AG04450 (cell line): ENCODE measurements at regions of chr2 and their contacts with region 1.

Region 1: DNA sequence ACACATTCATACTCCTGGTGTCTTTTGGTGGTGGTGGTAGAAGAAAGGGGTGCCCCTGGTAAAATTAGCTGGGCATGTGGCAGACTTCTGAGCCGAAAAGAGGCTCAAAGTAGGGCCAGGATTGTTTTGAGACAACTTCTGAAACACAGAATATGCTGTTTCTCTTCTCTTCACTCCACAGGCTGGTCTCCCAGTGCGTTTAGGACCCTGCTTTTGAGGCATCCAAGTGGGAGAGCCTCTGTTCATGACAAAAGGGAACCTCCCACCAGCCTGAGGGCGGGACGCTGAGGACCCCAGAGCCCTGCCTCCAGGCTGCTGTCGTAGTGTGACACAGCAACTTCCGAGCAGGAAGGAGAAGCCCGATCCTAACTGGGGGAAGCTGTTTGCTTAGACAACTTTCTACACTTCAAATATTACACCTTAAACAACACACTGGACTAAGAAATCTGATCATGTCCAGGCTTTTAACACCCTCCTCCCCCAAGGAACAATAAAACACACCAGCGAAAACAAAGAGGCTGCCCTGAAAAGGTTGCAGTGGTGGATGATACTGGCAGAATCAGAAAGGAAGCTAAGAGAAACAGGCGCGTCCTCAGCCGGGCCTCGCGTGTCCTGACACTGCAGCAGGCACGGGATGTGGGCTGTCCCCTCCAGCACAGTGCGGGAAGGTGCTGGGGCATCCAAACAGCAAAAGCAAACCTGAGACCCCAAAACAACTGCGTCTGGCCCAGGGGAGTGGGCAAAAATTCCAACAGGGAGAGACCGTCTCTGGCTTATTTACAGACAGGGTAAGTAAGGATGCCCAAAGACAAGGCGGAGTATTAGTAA is 9.3 kb downstream of the SERTAD2 start:
- DNase-seq: no peak
- H3K4me3 ChIP-seq: peak overlapping the region; percentile 62
- H3K27ac ChIP-seq: peak overlapping the region; percentile 96
- H3K27me3 ChIP-seq: no peaks in the 10 kb centered on the region
- CTCF ChIP-seq: no peak

Region 2: DNA sequence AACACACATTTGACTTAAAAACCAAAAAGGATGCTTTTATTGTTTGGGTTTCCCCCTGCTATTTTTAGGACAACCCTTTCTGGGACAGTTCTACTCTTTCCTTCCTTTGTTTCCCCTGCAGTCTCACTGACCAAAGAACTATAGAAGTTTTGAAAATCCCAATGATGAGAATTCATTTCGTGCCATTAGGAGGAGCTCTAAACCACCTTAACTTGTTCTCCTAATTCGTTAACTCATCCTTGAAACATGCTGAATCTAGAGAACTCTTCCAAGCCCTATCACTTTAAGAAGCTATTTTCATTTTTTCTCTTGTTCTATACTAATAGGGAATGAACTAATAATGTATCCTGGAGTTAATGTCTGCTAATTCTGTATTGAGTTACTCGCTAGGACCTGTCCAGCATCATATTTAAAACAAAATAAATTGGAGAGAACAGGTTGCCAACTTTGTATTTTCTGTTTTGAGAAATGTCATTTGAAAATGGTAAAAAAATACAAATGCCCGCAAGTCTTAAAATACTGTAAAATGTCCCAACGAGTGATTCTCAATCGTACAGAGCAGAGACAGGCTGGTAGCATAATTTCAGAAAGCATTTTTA is 57.4 kb before region 1 on chr2:
- CTCF ChIA-PET with region 1: interaction called, 18 read pairs
- POLR2A ChIA-PET with region 1: no interaction called
- DNase-seq: peak; percentile 11
- H3K4me3 ChIP-seq: no peak overlapping the region
- H3K27ac ChIP-seq: no peak overlapping the region
- H3K27me3 ChIP-seq: no peaks in the 10 kb centered on the region
- CTCF ChIP-seq: peak; percentile 70

Region 3: DNA sequence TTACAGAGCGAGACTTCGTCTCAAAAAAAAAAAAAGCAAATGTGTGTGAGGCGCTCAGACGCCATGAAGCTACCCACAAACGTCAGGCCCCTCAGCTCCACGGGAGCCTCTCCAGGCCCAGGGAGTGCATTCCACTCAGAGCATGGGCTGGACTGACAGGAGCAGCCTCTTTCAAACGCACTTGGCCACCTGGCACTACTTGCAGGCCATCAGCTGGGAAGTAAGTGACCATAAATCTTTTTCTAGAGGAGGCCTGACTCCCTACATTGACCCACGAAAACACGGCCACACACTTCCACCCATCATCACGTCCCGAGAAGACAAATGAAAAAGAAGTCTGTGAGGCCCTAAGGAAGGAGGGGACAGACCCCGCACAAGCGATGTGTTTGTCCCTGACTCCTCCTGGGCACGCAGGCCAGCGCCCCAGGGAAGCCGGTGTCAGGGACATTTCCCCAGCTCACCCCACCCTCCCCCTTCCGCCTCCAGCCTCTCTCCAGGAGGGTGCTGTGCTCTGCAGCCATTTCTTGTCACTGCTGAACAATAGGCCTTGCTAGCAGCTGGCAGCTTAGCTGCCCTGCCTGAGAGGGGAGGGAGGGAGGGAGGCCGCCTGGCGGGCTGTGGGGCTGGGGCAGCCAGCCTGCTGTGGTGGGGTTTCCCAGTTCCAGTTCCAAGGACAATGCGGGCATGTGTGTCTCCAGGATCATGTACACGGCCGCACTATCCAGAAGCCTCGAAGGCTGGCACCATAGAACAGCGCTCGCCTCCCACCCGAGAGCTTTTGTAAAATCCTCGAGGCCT is 17.2 kb before region 1 on chr2:
- CTCF ChIA-PET with region 1: interaction called, 35 read pairs
- POLR2A ChIA-PET with region 1: no interaction called
- DNase-seq: no peak
- H3K4me3 ChIP-seq: no peak overlapping the region
- H3K27ac ChIP-seq: no peak overlapping the region
- H3K27me3 ChIP-seq: peaks cover 8% of the 10 kb centered on the region
- CTCF ChIP-seq: no peak

Region 4: GRCh38 chr2:64704161-64704560 is 59.8 kb after region 1 on chr2:
- CTCF ChIA-PET with region 1: interaction called, 10 read pairs
- POLR2A ChIA-PET with region 1: no interaction called
- DNase-seq: no peak
- H3K4me3 ChIP-seq: no peak overlapping the region
- H3K27ac ChIP-seq: no peak overlapping the region
- H3K27me3 ChIP-seq: no peaks in the 10 kb centered on the region
- CTCF ChIP-seq: no peak

Region 5: GRCh38 chr2:64750817-64751285 is 106.5 kb after region 1 on chr2:
- CTCF ChIA-PET with region 1: interaction called, 16 read pairs
- POLR2A ChIA-PET with region 1: interaction called, 7 read pairs
- DNase-seq: peak; percentile 100
- H3K4me3 ChIP-seq: peak overlapping the region; percentile 85
- H3K27ac ChIP-seq: peak overlapping the region; percentile 60
- H3K27me3 ChIP-seq: no peaks in the 10 kb centered on the region
- CTCF ChIP-seq: no peak

Region 6: DNA sequence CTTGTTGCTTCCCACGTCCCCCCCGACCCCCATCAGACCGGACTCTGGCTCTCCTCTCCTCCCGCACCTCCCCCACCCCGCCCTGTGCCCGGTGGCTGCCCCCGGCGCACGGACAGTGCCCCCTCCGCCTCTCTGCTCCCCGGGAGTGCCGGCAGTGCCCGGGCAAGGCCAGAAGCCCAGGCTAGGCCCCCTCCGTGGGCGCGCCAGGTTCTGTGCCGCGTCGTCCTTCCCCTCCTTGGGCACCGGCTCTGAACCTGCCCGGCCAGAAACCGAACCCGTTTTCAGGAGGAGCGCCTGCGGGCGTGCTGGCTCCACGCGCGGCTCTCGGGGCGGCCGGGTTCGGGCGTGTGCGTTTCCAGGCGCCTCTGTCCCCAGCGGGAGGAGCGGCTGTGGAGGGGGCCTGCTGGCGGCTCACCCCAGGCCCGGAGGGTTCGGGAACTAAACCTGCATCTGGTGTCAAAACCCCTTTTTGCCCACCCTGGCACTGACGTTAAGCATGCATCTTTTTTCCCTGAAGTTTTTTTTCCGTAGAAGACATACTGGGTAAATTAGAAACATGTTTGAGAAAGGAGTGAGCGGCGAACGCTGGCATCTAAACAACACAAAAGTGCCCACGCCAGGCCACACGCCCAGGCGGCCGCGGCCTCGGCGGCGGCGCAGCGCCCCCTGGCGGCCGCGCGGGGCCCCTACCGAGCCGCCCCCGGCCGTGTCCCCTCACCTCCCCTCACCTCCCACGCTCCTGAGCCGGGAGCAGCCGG is 220.9 kb after region 1 on chr2:
- CTCF ChIA-PET with region 1: interaction called, 44 read pairs
- POLR2A ChIA-PET with region 1: interaction called, 14 read pairs
- DNase-seq: no peak
- H3K4me3 ChIP-seq: peak overlapping the region; percentile 57
- H3K27ac ChIP-seq: no peak overlapping the region
- H3K27me3 ChIP-seq: peaks cover 38% of the 10 kb centered on the region
- CTCF ChIP-seq: peak; percentile 53